ENCODE measurements at regions of chr9 and their contacts with region 1.

Region 1: DNA sequence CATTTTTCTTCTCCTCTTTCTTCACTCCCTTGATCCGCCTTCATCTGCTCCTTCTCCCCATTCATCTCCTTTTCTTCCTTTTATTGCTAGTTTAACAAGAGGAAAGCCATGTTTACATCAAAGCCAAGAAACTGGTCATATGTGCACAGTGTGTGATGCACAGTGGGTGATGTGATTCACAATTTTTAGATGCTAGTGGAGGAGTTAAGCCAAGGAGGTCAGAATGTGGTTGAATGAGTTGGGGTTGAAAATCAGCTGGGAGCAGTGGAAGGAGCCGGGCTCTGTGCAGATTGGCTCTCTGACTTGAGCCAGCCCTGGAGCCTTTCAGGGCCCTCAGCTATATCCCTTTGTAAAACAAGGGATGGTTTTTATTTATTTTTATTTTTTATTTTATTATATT is 7.3 kb downstream of the ACER2 start:
- DNase-seq: no peak
- ATAC-seq: no peak
- H3K4me3 ChIP-seq: no peak overlapping the region
- H3K27ac ChIP-seq: no peak overlapping the region
- H3K4me1 ChIP-seq: peaks cover 11% of the 10 kb centered on the region
- H3K27me3 ChIP-seq: no peaks in the 10 kb centered on the region
- CTCF ChIP-seq: no peak

Region 2: GRCh38 chr9:19085295-19085694 is 330.8 kb before region 1 on chr9:
- CTCF ChIA-PET with region 1: no interaction called
- POLR2A ChIA-PET with region 1: interaction called, 13 read pairs
- intact Hi-C with region 1: no loop called
- DNase-seq: peak; percentile 59
- ATAC-seq: no peak; the same call in 1 of the 2 replicates
- H3K4me3 ChIP-seq: no peak overlapping the region
- H3K27ac ChIP-seq: no peak overlapping the region
- H3K4me1 ChIP-seq: no peaks in the 10 kb centered on the region
- H3K27me3 ChIP-seq: no peaks in the 10 kb centered on the region
- CTCF ChIP-seq: peak; percentile 62

Region 3: DNA sequence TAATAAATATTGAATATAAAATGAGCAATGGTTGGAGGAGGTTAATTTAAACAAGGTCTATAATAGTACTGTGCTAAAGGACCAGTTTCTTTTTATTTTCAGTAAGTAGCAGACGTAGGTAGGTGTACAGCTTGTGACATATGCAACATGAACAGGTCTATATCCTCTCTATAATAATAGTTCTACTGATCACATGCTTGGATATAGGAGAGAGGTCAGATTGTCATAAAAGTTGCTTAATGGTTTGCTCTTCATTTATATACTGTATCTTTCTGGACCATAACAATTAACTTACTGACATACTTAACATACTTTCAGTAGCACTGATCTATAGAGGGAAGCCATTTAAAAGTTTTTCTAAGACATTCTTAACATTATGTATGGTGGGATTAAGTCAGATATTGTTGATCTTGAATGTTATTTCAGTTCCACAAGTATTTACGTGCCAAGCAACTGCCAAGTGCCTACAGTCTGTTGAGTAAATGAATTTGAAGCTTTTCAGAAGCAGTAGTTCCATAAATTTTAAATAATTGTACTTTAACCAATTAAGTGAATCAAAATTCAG is 117.6 kb before region 1 on chr9:
- CTCF ChIA-PET with region 1: no interaction called
- POLR2A ChIA-PET with region 1: no interaction called
- intact Hi-C with region 1: no loop called
- DNase-seq: no peak
- ATAC-seq: no peak
- H3K4me3 ChIP-seq: no peak overlapping the region
- H3K27ac ChIP-seq: no peak overlapping the region
- H3K4me1 ChIP-seq: no peaks in the 10 kb centered on the region
- H3K27me3 ChIP-seq: no peaks in the 10 kb centered on the region
- CTCF ChIP-seq: no peak

Region 4: DNA sequence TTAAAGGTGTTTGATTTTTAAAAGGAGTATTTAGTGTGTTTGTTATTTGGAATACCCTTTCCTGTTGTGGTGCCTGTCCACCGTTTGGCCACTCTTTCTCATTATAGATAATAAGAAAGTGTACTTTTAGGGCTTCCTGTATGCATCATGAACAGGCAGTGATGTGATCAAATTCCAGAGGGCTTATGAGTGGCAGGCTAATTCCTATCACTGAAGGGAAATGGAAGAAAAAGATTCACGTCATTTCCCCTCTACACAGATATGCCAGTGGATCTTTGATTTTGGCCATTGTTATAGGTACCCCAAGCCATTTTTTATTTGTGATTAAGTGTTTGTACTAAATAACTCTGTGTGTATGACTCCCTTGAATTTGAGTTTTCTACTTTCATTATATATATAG is 73.2 kb before region 1 on chr9:
- CTCF ChIA-PET with region 1: no interaction called
- POLR2A ChIA-PET with region 1: no interaction called
- intact Hi-C with region 1: no loop called
- DNase-seq: no peak
- ATAC-seq: no peak
- H3K4me3 ChIP-seq: no peak overlapping the region
- H3K27ac ChIP-seq: no peak overlapping the region
- H3K4me1 ChIP-seq: no peaks in the 10 kb centered on the region
- H3K27me3 ChIP-seq: no peaks in the 10 kb centered on the region
- CTCF ChIP-seq: no peak

Measured in PC-3 (cell line).